Ascending aorta (tissue), 2 donors: ENCODE measurements at regions of chr4 and their contacts with region 1.

Region 1: GRCh38 chr4:85761803-85762528 is 287.0 kb downstream of the ARHGAP24 start:
- DNase-seq: peak; percentile 14 to 81
- H3K4me3 ChIP-seq: peak overlapping the region; percentile 31 to 41
- H3K27ac ChIP-seq: peak overlapping the region; percentile 76 to 77
- H3K4me1 ChIP-seq: peaks cover 0 to 21% of the 10 kb centered on the region in 2 donors
- H3K27me3 ChIP-seq: no peaks in the 10 kb centered on the region
- CTCF ChIP-seq: no peak

Region 2: DNA sequence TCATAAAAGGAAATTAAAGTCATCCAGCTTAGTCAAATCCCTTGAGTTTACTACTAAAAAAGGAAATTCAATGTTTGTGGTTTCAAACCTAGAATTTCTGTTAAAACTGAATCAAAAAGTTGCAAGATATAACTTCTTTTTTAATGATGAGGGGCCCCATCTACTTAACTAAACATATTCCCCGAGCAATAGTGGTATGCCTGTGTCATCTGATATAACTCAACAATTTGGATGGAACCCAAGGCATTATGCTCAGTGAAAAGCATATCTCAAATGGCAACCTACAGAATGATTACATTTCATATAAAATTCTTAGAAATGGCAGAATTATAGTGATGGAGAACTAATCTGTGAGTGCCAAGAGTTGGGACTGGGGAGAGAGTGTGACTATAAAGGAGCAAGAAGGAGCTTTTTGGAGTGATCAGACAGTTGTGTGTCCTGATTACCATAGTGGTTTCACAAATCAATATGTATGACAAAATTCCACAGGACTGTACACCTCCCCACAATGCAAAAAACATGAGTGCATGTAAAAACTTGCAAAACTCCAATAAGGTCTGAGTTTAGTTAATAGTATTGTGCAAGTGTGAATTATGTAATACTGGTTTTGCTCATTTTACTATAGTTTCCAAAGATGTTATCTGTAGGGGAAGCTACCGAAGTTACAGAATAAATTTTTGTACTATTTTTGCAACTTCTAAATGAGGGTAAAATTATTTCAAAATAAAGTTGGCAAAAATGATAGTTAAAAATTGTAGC is 36.2 kb after region 1 on chr4:
- intact Hi-C with region 1: loop called (anchors 5 kb)
- DNase-seq: no peak
- H3K4me3 ChIP-seq: no peak overlapping the region
- H3K27ac ChIP-seq: peak overlapping the region in 1 of 2 donors; percentile 66
- H3K4me1 ChIP-seq: peaks cover 0 to 14% of the 10 kb centered on the region in 2 donors
- H3K27me3 ChIP-seq: no peaks in the 10 kb centered on the region
- CTCF ChIP-seq: no peak